ENCODE measurements at regions of chr7 and their contacts with region 1.

Region 1: DNA sequence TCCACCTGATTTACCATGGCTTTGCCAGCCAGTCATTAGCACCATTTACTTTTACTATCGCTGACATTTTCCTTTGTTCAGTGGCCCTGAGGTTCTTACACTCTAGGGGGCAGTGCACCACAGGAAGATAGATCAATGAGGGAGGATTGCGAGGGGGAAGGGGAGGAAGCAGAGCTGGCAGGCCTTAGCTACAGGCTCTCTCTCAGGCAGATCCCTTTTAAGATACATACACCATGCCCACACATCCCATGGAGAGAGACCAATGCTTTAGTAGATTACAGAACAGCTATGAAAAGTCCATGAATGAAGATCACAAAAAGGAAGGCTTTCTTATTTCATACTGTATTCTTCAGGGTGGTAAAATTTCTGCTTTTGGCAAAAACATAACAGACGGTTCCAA is 47.4 kb downstream of the DENND11 start:
- DNase-seq: peak in 3 of 5 donors; percentile 45 to 57 (median 52)
- ATAC-seq: peak; percentile 31 to 79 (median 65)
- H3K4me3 ChIP-seq: no peak overlapping the region
- H3K27ac ChIP-seq: peak overlapping the region in 1 of 12 donors; percentile 28
- H3K4me1 ChIP-seq: peaks cover 0 to 20% (median 7%) of the 10 kb centered on the region in 12 donors
- H3K27me3 ChIP-seq: no peaks in the 10 kb centered on the region
- CTCF ChIP-seq: peak; percentile 48 to 71 (median 60)
- POLR2A ChIP-seq: no peak

Region 2: DNA sequence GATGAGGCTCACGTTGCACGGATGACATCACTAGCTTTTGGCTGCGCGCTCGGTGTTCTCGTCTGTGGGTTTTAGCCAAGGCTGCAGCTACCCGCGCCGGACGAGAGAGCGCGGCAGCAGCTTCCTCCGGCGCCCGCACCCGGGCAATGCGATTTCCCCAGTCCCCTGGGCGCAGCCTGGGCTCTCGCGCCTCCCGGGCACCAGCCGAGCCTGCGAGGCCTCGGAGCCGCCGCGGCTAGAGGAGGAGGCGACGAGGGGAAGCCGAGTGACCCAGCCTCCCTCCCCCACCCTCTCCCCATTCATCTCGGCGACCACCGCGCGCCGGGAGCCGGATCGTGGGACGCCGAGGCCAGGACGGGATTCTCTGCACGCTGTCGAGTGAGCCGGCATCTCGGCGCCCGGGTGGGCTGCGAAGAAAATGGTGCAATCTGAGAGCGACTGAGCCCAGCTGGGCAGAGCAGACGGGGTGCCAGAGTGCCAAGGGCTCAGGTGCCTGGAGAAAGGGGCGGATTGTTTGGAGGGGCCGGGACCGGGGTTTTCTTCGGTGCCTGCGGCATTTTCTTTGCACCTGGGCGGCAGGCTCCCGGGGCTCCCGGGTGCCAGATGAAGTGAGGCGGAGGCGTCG is 581.9 kb before region 1 on chr7:
- intact Hi-C with region 1: loop called in 1 of 10 experiments (anchors 2 kb)
- DNase-seq: peak; percentile 46 to 77 (median 66)
- ATAC-seq: peak; percentile 63 to 85 (median 80)
- H3K4me3 ChIP-seq: peak overlapping the region; percentile 46 to 67 (median 58)
- H3K27ac ChIP-seq: peak overlapping the region in 5 of 12 donors; percentile 12 to 61 (median 54)
- H3K4me1 ChIP-seq: peaks cover 0 to 42% (median 20%) of the 10 kb centered on the region in 12 donors
- H3K27me3 ChIP-seq: peaks cover 0 to 77% (median 8%) of the 10 kb centered on the region in 9 donors
- CTCF ChIP-seq: peak in 1 of 12 donors; percentile 8
- POLR2A ChIP-seq: no peak

Region 3: DNA sequence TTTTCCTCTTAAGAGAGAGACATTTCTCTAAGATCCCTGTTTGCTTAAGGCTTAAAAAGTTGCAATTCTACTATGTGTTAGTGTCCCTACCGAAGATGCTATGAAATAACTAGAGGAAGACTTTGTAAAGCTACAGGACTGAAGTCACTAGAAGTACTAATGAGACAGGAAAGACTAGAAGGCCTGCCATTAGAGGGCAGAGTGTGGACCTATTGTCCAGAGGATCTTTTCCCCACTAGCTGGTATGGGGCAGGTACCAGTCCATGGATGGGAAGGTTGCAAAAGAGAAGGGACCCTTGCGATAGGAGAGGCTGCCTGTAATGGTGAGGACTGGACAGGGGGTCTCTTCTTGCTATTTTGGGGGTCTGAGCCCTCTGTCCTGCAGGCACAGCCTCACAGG is 402.6 kb before region 1 on chr7:
- intact Hi-C with region 1: loop called in 1 of 10 experiments (anchors 10 kb)
- DNase-seq: no peak
- ATAC-seq: peak in 1 of 4 donors; percentile 41
- H3K4me3 ChIP-seq: no peak overlapping the region
- H3K27ac ChIP-seq: no peak overlapping the region
- H3K4me1 ChIP-seq: no peaks in the 10 kb centered on the region
- H3K27me3 ChIP-seq: no peaks in the 10 kb centered on the region
- CTCF ChIP-seq: peak in 5 of 12 donors; percentile 12 to 28 (median 18)
- POLR2A ChIP-seq: no peak

Region 4: GRCh38 chr7:141541375-141541774 is 113.2 kb before region 1 on chr7:
- intact Hi-C with region 1: loop called in 3 of 10 experiments (anchors 10 kb)
- DNase-seq: no peak
- ATAC-seq: peak; percentile 26 to 55 (median 38)
- H3K4me3 ChIP-seq: no peak overlapping the region
- H3K27ac ChIP-seq: no peak overlapping the region
- H3K4me1 ChIP-seq: no peaks in the 10 kb centered on the region
- H3K27me3 ChIP-seq: no peaks in the 10 kb centered on the region
- CTCF ChIP-seq: no peak
- POLR2A ChIP-seq: no peak

Region 5: GRCh38 chr7:141563956-141564631 is 90.5 kb before region 1 on chr7:
- intact Hi-C with region 1: loop called in 4 of 10 experiments (anchors 5 to 10 kb)
- DNase-seq: no peak
- ATAC-seq: no peak
- H3K4me3 ChIP-seq: no peak overlapping the region
- H3K27ac ChIP-seq: no peak overlapping the region
- H3K4me1 ChIP-seq: peaks cover 0 to 30% (median under 1%) of the 10 kb centered on the region in 12 donors
- H3K27me3 ChIP-seq: no peaks in the 10 kb centered on the region
- CTCF ChIP-seq: no peak
- POLR2A ChIP-seq: no peak

Region 6: GRCh38 chr7:141737834-141738591 is 83.5 kb after region 1 on chr7 and contains the start of gene SSBP1:
- intact Hi-C with region 1: loop called in 8 of 10 experiments (anchors 2 to 10 kb)
- DNase-seq: peak; percentile 90 to 92 (median 92)
- ATAC-seq: peak; percentile 94 to 98 (median 96)
- H3K4me3 ChIP-seq: peak within 1 kb of the TSS; percentile 63 to 84 (median 72)
- H3K27ac ChIP-seq: peak within 1 kb of the TSS in 11 of 12 donors; percentile 70 to 87 (median 82)
- H3K4me1 ChIP-seq: peaks cover 0 to 31% (median 17%) of the 10 kb centered on the region in 12 donors
- H3K27me3 ChIP-seq: no peaks in the 10 kb centered on the region
- CTCF ChIP-seq: peak; percentile 53 to 93 (median 73)
- POLR2A ChIP-seq: peak in 1 of 2 donors; percentile 46
- total RNA-seq, gene SSBP1: 95.5 to 120 (median 104) TPM

Measured in heart left ventricle (tissue), 16 donors.